ENCODE measurements at regions of chr12 and their contacts with region 1.

Region 1: DNA sequence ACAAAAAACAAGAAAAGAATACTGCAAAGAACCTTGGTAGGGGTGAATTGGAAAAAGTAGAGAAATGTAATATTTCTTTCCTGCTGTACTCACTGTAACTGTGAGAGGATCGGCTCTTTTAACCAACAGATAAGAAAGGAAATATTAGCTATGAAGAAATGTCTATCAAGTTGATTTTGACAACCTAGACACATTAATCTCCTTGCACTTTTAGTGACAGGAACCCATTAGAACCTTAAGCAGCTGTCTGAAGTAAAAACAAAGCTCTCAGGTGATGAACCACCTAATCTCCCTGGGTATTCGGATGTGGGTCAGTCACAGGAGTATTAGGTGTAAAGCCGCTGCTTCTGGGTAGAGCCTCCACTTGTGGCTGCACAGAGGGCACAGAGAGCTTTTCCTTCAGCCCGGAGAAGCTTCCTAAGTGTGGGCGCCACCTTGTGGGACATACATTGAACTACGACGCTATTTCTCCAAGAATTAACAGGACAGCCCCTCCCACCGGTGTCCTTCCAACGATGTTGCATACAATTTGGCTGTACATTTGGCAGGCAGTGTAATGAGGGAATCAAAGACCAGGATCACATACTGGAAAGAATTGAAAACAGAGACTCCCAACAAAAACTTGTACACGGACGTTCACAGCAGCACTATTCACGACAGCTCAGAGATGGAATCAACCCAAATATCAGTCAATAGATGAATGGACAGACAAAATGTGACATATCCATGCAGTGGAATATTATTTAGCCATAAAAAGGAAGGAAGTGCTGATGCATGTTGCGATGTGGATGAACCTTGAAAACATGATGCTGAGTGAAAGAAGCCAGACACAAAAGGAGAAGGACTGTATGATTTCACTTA is 28.9 kb upstream of the MAPKAPK5 start:
- DNase-seq: peak; percentile 91
- H3K4me3 ChIP-seq: no peak overlapping the region
- H3K27ac ChIP-seq: no peak overlapping the region
- H3K4me1 ChIP-seq: peaks cover 6% of the 10 kb centered on the region
- H3K27me3 ChIP-seq: no peaks in the 10 kb centered on the region
- CTCF ChIP-seq: peak; percentile 68 to 93 (median 84)
- POLR2A ChIP-seq: no peak

Region 2: GRCh38 chr12:111741235-111741812 is 71.8 kb before region 1 on chr12:
- intact Hi-C with region 1: no loop called
- DNase-seq: peak; percentile 64
- H3K4me3 ChIP-seq: no peak overlapping the region
- H3K27ac ChIP-seq: peak overlapping the region; percentile 14 to 40
- H3K4me1 ChIP-seq: peaks cover 10% of the 10 kb centered on the region
- H3K27me3 ChIP-seq: no peaks in the 10 kb centered on the region
- CTCF ChIP-seq: no peak
- POLR2A ChIP-seq: no peak

Region 3: GRCh38 chr12:111757361-111758119 is 55.6 kb before region 1 on chr12:
- intact Hi-C with region 1: loop called (anchors 5 kb)
- DNase-seq: peak; percentile 54
- H3K4me3 ChIP-seq: no peak overlapping the region
- H3K27ac ChIP-seq: no peak overlapping the region
- H3K4me1 ChIP-seq: peaks cover 31% of the 10 kb centered on the region
- H3K27me3 ChIP-seq: no peaks in the 10 kb centered on the region
- CTCF ChIP-seq: no peak
- POLR2A ChIP-seq: no peak